A673 (cell line): ENCODE measurements at regions of chr13 and their contacts with region 1.

Region 1: GRCh38 chr13:106619688-106620555 is 52.0 kb upstream of the ARGLU1 start:
- DNase-seq: peak; percentile 78
- H3K4me3 ChIP-seq: no peak overlapping the region
- H3K27ac ChIP-seq: no peak overlapping the region
- H3K4me1 ChIP-seq: no peaks in the 10 kb centered on the region
- H3K27me3 ChIP-seq: peaks cover 47% of the 10 kb centered on the region
- CTCF ChIP-seq: peak; percentile 82

Region 2: GRCh38 chr13:105121221-105121620 is 1498.7 kb before region 1 on chr13:
- CTCF ChIA-PET with region 1: interaction called, 12 read pairs
- POLR2A ChIA-PET with region 1: no interaction called
- intact Hi-C with region 1: no loop called
- DNase-seq: no peak
- H3K4me3 ChIP-seq: no peak overlapping the region
- H3K27ac ChIP-seq: no peak overlapping the region
- H3K4me1 ChIP-seq: no peaks in the 10 kb centered on the region
- H3K27me3 ChIP-seq: no peaks in the 10 kb centered on the region
- CTCF ChIP-seq: no peak

Region 3: DNA sequence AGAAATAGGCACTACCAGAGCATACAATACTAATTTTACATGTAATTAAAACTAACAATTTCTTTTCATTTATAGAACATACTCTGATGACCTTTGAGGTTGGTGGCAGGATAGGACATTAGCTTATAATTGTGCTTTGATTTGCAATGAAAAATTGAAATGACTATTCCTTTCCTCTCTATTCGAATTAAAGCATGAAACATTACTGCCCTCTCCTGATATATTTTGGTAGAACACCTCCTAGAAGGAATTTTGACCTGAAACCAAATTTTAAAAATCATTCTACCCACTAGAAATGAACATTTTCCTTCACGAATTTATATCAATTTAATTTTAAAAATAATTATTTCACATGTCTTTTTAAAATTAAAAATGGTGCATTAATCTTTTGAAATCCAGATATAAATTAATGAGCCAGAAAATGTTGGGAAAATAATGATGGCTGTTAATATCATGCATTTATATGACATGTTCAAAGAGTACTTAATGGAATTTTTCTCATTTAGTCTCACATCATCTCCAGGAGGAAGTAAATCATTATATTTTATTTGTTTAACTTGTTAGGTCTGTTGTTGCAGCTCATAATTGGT is 504.3 kb after region 1 on chr13:
- CTCF ChIA-PET with region 1: no interaction called
- POLR2A ChIA-PET with region 1: no interaction called
- intact Hi-C with region 1: loop called (anchors 10 kb)
- DNase-seq: peak; percentile 22
- H3K4me3 ChIP-seq: no peak overlapping the region
- H3K27ac ChIP-seq: no peak overlapping the region
- H3K4me1 ChIP-seq: no peaks in the 10 kb centered on the region
- H3K27me3 ChIP-seq: no peaks in the 10 kb centered on the region
- CTCF ChIP-seq: peak; percentile 60